MCF 10A (cell line): ENCODE measurements at regions of chr1 and their contacts with region 1.

Region 1: DNA sequence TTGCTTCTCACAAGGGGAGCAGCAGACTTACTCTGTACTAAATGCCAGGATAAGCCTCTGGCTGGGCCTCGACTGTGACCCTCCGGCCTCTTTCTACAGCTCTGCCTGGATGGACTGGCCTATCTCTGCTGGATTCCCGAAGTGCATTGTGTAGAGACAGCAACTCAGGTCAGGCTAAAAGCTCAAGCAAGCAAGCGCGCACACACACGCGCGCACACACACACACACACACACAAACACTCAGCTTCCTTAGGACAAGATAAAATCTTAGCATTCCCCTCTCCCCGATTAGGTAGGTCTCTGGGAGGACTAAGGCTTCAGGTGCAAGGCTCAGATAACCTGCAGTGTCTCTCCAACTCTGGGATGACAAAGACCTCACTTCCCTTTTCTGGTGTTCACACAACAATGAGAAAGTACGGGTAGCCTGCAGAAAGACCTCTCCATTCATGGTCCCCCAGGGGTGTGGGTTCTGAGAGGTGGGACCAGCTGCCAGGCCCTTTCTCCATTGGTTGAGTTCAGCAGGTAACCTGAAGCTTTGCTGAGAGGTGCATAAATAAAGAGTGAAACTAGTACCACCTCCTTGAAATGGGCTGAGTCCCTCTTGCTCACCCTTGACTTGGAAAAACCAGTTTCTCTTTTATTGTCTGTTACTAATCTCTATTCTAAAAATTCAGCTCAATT is 155.1 kb upstream of the CAMK1G start:
- DNase-seq: peak; percentile 99
- H3K4me3 Mint-ChIP-seq: peak overlapping the region; percentile 93
- H3K27ac Mint-ChIP-seq: peak overlapping the region; percentile 90
- H3K4me1 Mint-ChIP-seq: peaks cover 60% of the 10 kb centered on the region
- H3K27me3 Mint-ChIP-seq: no peaks in the 10 kb centered on the region
- CTCF ChIP-seq: no peak

Region 2: GRCh38 chr1:209238356-209238755 is 190.0 kb before region 1 on chr1:
- CTCF ChIA-PET with region 1: no interaction called
- POLR2A ChIA-PET with region 1: no interaction called
- intact Hi-C with region 1: no loop called
- DNase-seq: no peak
- H3K4me3 Mint-ChIP-seq: no peak overlapping the region
- H3K27ac Mint-ChIP-seq: no peak overlapping the region
- H3K4me1 Mint-ChIP-seq: no peaks in the 10 kb centered on the region
- H3K27me3 Mint-ChIP-seq: peaks cover 10% of the 10 kb centered on the region
- CTCF ChIP-seq: no peak

Region 3: GRCh38 chr1:209326831-209327230 is 101.5 kb before region 1 on chr1:
- CTCF ChIA-PET with region 1: interaction called, 3 read pairs
- POLR2A ChIA-PET with region 1: interaction called, 17 read pairs
- intact Hi-C with region 1: no loop called
- DNase-seq: no peak
- H3K4me3 Mint-ChIP-seq: no peak overlapping the region
- H3K27ac Mint-ChIP-seq: no peak overlapping the region
- H3K4me1 Mint-ChIP-seq: peaks cover 27% of the 10 kb centered on the region
- H3K27me3 Mint-ChIP-seq: no peaks in the 10 kb centered on the region
- CTCF ChIP-seq: no peak

Region 4: DNA sequence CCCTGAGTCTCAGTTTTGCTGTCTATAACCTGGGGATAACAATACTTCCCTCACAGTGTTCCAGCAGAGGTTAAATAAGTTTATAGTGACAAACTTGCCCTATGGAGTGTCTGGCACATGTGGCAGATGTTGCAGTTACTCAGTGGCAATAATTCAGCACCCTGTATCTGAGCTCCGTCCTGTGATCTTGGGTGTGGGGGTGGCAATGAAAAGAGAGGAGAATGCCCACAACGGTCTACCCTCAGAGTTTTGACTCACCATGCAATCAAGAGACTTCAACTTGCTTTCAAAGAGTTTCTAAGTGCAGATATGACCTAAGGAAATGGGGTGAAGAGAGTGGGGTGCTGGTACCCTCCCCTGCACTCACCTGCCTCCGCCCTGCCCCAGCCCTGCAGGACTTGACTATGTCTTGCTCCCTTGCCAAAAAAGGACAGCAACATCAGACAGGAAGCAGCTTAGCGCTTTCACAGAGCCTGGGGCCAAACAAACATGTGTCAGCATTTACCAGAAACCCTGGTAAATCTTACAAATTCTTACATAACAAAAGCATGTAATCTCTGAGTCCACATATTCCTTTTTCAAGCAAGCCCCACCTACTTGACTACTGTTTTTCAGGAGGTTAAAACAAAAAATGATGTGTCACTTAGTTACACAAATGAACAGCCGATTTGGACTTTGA is 29.9 kb before region 1 on chr1:
- CTCF ChIA-PET with region 1: interaction called, 368 read pairs
- POLR2A ChIA-PET with region 1: interaction called, 2,930 read pairs
- intact Hi-C with region 1: no loop called
- DNase-seq: peak; percentile 100
- H3K4me3 Mint-ChIP-seq: peak overlapping the region; percentile 29
- H3K27ac Mint-ChIP-seq: peak overlapping the region; percentile 79
- H3K4me1 Mint-ChIP-seq: peaks cover 28% of the 10 kb centered on the region
- H3K27me3 Mint-ChIP-seq: no peaks in the 10 kb centered on the region
- CTCF ChIP-seq: no peak

Region 5: GRCh38 chr1:209411491-209411929 is 16.9 kb before region 1 on chr1:
- CTCF ChIA-PET with region 1: interaction called, 368 read pairs
- POLR2A ChIA-PET with region 1: interaction called, 2,930 read pairs
- intact Hi-C with region 1: loop called (anchors 1 kb)
- DNase-seq: peak; percentile 99
- H3K4me3 Mint-ChIP-seq: peak overlapping the region; percentile 44
- H3K27ac Mint-ChIP-seq: peak overlapping the region; percentile 89
- H3K4me1 Mint-ChIP-seq: peaks cover 70% of the 10 kb centered on the region
- H3K27me3 Mint-ChIP-seq: no peaks in the 10 kb centered on the region
- CTCF ChIP-seq: no peak

Region 6: DNA sequence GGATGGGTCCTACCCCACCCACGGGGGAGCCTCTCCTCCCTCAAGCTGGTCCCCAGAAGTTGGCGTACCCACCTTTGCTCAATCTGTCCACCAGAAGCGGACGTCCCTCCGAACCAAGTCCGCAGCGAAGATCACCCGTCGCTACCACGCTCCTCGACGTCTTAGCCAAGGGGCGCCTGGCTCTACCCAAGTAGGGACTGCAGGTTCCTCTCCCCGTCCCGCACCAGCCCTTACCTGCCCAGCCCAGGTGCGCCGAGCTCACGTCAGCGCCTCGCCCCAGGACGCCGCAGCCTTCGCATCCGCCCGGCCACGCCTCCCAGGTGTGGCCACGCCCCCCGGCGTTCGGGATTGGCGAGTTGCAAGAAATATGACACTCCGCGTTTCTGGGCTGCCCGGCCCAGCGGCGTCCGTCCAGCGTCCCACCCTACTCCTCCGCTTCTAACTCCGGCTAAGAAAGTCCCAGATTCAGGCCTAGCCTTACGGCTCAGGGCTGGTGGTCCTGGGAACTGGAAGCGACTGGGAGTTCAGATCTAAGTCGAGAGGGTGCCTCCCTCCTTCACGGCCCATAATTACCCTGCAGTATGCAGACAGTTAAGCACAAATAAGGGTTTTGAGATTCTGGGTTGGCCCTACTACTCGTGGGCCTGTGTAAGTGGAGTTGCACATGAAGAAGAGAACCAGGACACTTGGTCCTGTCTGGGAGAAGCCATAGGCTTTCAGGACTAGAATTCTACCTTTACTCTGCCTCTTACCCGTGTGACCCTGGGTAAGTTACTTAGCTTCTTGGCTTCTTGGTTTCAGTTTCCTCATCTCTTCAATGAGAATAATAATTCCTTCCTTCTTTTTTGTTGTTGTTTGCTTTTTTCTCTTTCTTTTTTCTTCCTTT is 377.7 kb after region 1 on chr1 and contains the start of gene IRF6:
- CTCF ChIA-PET with region 1: no interaction called
- POLR2A ChIA-PET with region 1: interaction called, 10 read pairs
- intact Hi-C with region 1: no loop called
- DNase-seq: peak; percentile 99
- H3K4me3 Mint-ChIP-seq: peak within 1 kb of the TSS; percentile 90
- H3K27ac Mint-ChIP-seq: peak within 1 kb of the TSS; percentile 92
- H3K4me1 Mint-ChIP-seq: peaks cover 74% of the 10 kb centered on the region
- H3K27me3 Mint-ChIP-seq: no peaks in the 10 kb centered on the region
- CTCF ChIP-seq: no peak
- total RNA-seq, gene IRF6: 87.8 and 106 TPM in 2 replicates